ENCODE measurements at regions of chr3 and their contacts with region 1.

Region 1: DNA sequence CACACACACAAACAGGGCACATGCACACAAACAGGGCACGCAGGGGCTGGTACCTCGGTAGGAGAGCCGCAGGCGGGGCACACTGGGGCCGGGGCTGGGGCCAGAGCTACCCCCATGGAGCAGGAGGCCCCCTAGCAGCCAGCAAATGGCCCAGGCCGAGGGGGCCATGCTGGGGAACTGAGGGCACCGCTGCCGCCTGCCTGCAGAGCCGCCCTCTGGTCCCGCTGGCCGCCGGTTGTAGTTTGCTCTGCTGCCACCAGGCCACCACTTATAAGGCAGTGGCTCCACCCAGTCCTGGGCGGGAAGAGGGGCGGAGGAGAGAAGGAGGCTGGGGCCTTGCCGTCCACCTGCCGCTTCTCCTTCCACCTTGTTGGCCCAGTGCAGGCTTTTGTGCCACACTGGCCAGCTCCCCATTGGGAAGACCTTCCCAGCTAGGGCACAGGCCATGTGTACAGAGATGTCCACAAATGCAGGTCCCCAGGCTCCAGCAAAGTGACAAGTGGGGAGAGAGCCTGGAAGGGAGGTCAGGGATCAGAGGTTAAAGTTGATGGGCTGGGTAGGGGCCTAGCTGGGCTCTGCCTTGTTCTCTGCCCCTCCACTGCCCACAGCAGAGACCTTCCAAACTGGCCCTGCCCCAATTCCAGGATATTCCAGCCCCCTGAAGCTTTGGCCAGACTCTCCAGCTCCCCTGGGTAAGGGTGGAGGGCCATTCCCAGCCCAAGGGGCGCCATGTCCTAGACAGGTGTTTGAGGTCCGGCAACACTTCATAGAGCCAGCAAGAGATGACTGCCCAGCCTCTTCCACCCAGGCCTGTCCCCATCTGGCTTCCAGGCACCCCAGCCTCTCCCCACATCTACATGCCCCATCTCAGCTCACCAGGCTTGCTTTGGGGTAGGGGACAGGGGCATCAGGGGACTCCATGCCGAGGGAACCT is at the start of gene SEMA3G:
- DNase-seq: peak; percentile 74
- ATAC-seq: peak; percentile 90
- H3K4me3 ChIP-seq: peak within 1 kb of the TSS; percentile 46 to 55
- H3K27ac ChIP-seq: peak within 1 kb of the TSS; percentile 55; the same call in 1 of the 2 replicates
- H3K4me1 ChIP-seq: peaks cover 8 to 23% of the 10 kb centered on the region in 2 experiments
- H3K27me3 ChIP-seq: no peaks in the 10 kb centered on the region
- CTCF ChIP-seq: peak in 2 of 3 experiments; percentile 42 to 57; a peak in 4 of 6 replicates
- POLR2A ChIP-seq: peak; percentile 98
- RAD21 ChIP-seq: no peak
- total RNA-seq, gene SEMA3G: 4.2 TPM

Region 2: GRCh38 chr3:52181543-52181942 is 263.6 kb before region 1 on chr3:
- CTCF ChIA-PET with region 1: no interaction called
- POLR2A ChIA-PET with region 1: no interaction called
- RAD21 ChIA-PET with region 1: no interaction called
- intact Hi-C with region 1: no loop called
- DNase-seq: no peak
- ATAC-seq: no peak
- H3K4me3 ChIP-seq: no peak overlapping the region
- H3K27ac ChIP-seq: no peak overlapping the region
- H3K4me1 ChIP-seq: no peaks in the 10 kb centered on the region
- H3K27me3 ChIP-seq: no peaks in the 10 kb centered on the region
- CTCF ChIP-seq: no peak
- POLR2A ChIP-seq: no peak
- RAD21 ChIP-seq: no peak

Region 3: DNA sequence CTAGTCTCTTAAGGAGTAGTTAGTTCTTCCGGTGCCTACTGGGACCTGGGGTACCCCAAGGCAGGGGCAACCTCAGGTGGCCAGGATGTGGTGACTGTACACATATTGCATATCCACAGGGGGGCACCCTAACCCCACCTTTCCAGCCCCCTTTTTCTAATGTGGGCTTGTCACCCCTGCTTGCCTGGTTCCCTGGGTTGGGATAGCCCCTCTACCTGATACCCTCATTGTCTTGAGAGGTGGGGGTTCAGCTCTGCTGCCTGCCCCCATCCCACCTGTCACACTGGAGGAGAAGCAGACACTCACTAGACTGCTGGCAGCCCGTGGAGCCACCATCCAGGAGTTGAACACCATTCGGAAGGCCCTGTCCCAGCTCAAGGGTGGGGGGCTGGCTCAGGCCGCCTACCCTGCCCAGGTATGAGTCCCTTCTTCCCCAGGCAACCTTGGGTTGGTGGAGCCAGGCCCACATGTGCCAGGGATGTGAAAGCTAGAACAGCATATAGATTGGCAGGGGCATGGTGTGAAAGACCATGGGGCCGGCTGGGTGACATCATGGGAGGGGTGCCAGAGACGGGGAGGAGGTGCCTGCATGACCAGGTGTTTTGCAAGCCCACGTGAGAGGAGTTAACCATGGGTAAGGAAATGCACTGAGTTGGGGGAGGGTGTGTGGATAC is 153.5 kb before region 1 on chr3:
- CTCF ChIA-PET with region 1: no interaction called
- POLR2A ChIA-PET with region 1: no interaction called
- RAD21 ChIA-PET with region 1: no interaction called
- intact Hi-C with region 1: loop called (anchors 5 kb)
- DNase-seq: no peak
- ATAC-seq: peak; percentile 32; the same call in 1 of the 2 replicates
- H3K4me3 ChIP-seq: no peak overlapping the region
- H3K27ac ChIP-seq: no peak overlapping the region
- H3K4me1 ChIP-seq: peaks cover 5 to 11% of the 10 kb centered on the region in 2 experiments
- H3K27me3 ChIP-seq: no peaks in the 10 kb centered on the region
- CTCF ChIP-seq: peak; percentile 44 to 81 (median 69)
- POLR2A ChIP-seq: no peak
- RAD21 ChIP-seq: peak; percentile 87

Region 4: GRCh38 chr3:52406231-52406661 is 38.9 kb before region 1 on chr3:
- CTCF ChIA-PET with region 1: no interaction called
- POLR2A ChIA-PET with region 1: no interaction called
- RAD21 ChIA-PET with region 1: no interaction called
- intact Hi-C with region 1: loop called (anchors 1 kb)
- DNase-seq: no peak
- ATAC-seq: no peak
- H3K4me3 ChIP-seq: no peak overlapping the region
- H3K27ac ChIP-seq: no peak overlapping the region
- H3K4me1 ChIP-seq: peaks cover 9 to 15% of the 10 kb centered on the region in 2 experiments; a peak in 3 of 4 replicates
- H3K27me3 ChIP-seq: no peaks in the 10 kb centered on the region
- CTCF ChIP-seq: no peak
- POLR2A ChIP-seq: no peak
- RAD21 ChIP-seq: no peak

Region 5: GRCh38 chr3:52428151-52429005 is 16.7 kb before region 1 on chr3:
- CTCF ChIA-PET with region 1: interaction called, 13 read pairs
- POLR2A ChIA-PET with region 1: interaction called, 3 read pairs
- RAD21 ChIA-PET with region 1: no interaction called
- intact Hi-C with region 1: loop called (anchors 1 kb)
- DNase-seq: peak; percentile 51
- ATAC-seq: peak; percentile 97
- H3K4me3 ChIP-seq: no peak overlapping the region
- H3K27ac ChIP-seq: no peak overlapping the region
- H3K4me1 ChIP-seq: no peaks in the 10 kb centered on the region
- H3K27me3 ChIP-seq: no peaks in the 10 kb centered on the region
- CTCF ChIP-seq: peak; percentile 83 to 93 (median 88)
- POLR2A ChIP-seq: no peak
- RAD21 ChIP-seq: peak; percentile 94

Region 6: GRCh38 chr3:52593103-52593502 is 148.0 kb after region 1 on chr3:
- CTCF ChIA-PET with region 1: no interaction called
- POLR2A ChIA-PET with region 1: no interaction called
- RAD21 ChIA-PET with region 1: no interaction called
- intact Hi-C with region 1: no loop called
- DNase-seq: no peak
- ATAC-seq: no peak
- H3K4me3 ChIP-seq: no peak overlapping the region
- H3K27ac ChIP-seq: no peak overlapping the region
- H3K4me1 ChIP-seq: peaks cover 0 to 5% of the 10 kb centered on the region in 2 experiments; a peak in 1 of 4 replicates
- H3K27me3 ChIP-seq: no peaks in the 10 kb centered on the region
- CTCF ChIP-seq: no peak
- POLR2A ChIP-seq: no peak
- RAD21 ChIP-seq: no peak